H1 (cell line): ENCODE measurements at regions of chr15 and their contacts with region 1.

Region 1: GRCh38 chr15:50051803-50052419 is 67.1 kb downstream of the ATP8B4 start:
- DNase-seq: no peak
- H3K4me3 ChIP-seq: no peak overlapping the region
- H3K27ac ChIP-seq: no peak overlapping the region
- H3K4me1 ChIP-seq: no peaks in the 10 kb centered on the region
- H3K27me3 ChIP-seq: no peaks in the 10 kb centered on the region
- CTCF ChIP-seq: peak in 2 of 3 experiments; percentile 63 to 70; a peak in 3 of 4 replicates
- EP300 ChIP-seq: no peak
- POLR2A ChIP-seq: no peak
- RAD21 ChIP-seq: peak; percentile 89 to 91

Region 2: GRCh38 chr15:49235446-49236124 is 816.3 kb before region 1 on chr15:
- CTCF ChIA-PET with region 1: interaction called, 22 read pairs
- POLR2A ChIA-PET with region 1: no interaction called
- DNase-seq: peak in 1 of 2 experiments; percentile 59
- H3K4me3 ChIP-seq: no peak overlapping the region
- H3K27ac ChIP-seq: no peak overlapping the region
- H3K4me1 ChIP-seq: 0 out of 7 replicates have a peak, but pooled peaks cover 0 to 2% (median 0%) of the 10 kb centered on the region in 4 experiments
- H3K27me3 ChIP-seq: no peaks in the 10 kb centered on the region
- CTCF ChIP-seq: peak in 2 of 3 experiments; percentile 80 to 88; a peak in 3 of 4 replicates
- EP300 ChIP-seq: no peak
- POLR2A ChIP-seq: no peak
- RAD21 ChIP-seq: peak; percentile 95 to 97

Region 3: DNA sequence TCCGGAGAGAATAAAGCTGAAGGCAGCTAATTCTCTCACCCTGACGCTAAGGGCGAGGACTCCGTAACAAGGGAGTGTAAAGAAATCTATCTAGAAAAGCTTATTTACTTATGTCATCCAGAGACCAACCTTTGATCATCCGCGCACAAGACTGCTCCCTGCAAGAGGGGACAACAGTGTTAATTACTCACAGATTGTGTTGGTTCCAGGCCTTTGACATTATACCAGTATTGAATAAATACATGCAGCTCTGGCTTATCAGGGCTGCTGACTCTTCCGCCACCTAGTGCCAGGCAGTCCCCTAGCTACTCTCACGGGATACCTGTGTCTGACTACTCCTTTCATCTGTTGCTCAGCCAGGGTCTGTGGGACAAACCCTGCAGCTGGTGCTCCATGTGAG is 219.4 kb before region 1 on chr15:
- CTCF ChIA-PET with region 1: interaction called, 10 read pairs
- POLR2A ChIA-PET with region 1: no interaction called
- DNase-seq: peak; percentile 13 to 48
- H3K4me3 ChIP-seq: no peak overlapping the region
- H3K27ac ChIP-seq: no peak overlapping the region
- H3K4me1 ChIP-seq: no peaks in the 10 kb centered on the region
- H3K27me3 ChIP-seq: no peaks in the 10 kb centered on the region
- CTCF ChIP-seq: peak; percentile 63 to 83 (median 80)
- EP300 ChIP-seq: no peak
- POLR2A ChIP-seq: no peak
- RAD21 ChIP-seq: peak; percentile 76 to 82

Region 4: DNA sequence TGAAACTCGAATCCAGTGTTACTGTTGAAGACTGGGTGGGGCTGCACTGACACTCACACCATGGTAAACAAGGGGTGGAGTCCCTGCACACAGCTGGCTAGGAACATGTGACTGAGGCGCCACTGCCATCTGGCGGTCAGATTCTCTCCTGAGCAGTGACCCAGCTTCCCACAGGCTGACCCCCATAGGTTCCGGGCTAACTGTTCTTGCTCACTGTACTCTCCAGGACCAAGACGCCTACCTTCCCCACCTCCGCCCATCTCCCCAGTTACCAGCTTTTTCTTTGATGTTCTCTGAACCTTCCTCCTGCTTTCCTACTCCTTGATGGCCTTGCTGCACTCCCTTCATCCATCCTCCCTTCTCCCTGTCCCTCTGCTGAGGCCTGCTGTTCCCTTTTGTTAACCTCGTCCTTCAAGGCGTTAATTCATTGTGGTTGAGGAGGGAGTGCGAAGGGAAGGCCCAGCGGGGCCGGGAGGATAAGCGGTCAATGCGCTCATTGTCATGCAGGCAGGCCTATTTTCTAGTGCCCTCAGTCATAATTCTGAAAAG is 48.1 kb before region 1 on chr15:
- CTCF ChIA-PET with region 1: interaction called, 10 read pairs
- POLR2A ChIA-PET with region 1: interaction called, 3 read pairs
- DNase-seq: peak; percentile 86 to 92
- H3K4me3 ChIP-seq: peak overlapping the region in 1 of 4 experiments; percentile 41; a peak in 2 of 8 replicates
- H3K27ac ChIP-seq: no peak overlapping the region
- H3K4me1 ChIP-seq: peaks cover 0 to 4% (median 1%) of the 10 kb centered on the region in 4 experiments; a peak in 1 of 7 replicates
- H3K27me3 ChIP-seq: no peaks in the 10 kb centered on the region; a peak in 1 of 7 replicates
- CTCF ChIP-seq: peak; percentile 82 to 97 (median 95)
- EP300 ChIP-seq: no peak
- POLR2A ChIP-seq: no peak
- RAD21 ChIP-seq: peak; percentile 87 to 89

Region 5: GRCh38 chr15:50063226-50063625 is 11.3 kb after region 1 on chr15:
- CTCF ChIA-PET with region 1: interaction called, 25 read pairs
- POLR2A ChIA-PET with region 1: no interaction called
- DNase-seq: no peak
- H3K4me3 ChIP-seq: no peak overlapping the region
- H3K27ac ChIP-seq: no peak overlapping the region
- H3K4me1 ChIP-seq: peaks cover 0 to 4% (median under 1%) of the 10 kb centered on the region in 4 experiments; a peak in 2 of 7 replicates
- H3K27me3 ChIP-seq: no peaks in the 10 kb centered on the region
- CTCF ChIP-seq: no peak
- EP300 ChIP-seq: no peak
- POLR2A ChIP-seq: no peak
- RAD21 ChIP-seq: no peak